ENCODE measurements at regions of chr13 and their contacts with region 1.

Region 1: DNA sequence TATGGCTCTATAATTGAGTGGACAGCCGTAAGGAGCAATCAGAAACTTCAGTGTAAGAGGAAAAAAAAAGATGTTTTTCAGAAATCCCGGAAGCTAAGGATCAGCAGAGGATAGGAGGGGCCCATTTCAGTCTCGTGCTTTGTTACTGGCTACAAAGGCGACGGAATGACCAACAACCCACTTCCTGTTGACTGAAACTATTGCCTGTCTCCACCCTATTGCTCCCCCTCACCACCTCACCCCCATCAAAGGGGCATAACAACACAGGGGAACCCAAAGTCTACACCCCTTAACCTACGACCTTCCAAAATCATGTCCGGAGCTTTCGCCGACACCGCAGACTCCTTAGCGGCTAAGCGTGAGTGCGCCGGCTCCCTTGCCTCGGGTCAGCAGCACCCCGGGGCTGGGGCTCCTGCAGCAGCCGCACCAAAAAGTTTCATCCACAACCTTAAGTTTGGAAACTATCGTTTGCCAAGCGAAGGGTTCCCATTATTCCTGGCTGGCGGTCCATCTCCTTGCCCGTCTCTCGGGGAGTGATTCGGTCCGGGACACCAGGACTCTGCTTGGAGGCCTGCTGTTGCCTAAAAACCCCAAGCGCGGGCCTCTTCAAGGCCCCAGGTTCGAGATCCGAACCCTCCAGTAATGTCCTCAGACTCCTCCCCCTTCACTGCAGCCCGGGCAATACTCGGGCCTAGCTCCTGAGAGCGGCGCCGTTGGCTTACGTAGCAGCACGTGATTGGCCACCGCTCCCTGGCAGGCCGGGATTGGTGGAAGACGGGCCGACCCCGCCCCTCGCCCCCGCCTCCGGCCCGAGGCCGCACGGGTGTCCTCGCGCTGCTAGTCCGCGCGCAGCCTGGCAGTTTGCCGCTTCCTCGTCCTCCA is at the start of gene TPP2:
- DNase-seq: peak; percentile 97
- H3K4me3 ChIP-seq: peak within 1 kb of the TSS; percentile 93
- H3K27ac ChIP-seq: peak within 1 kb of the TSS; percentile 100
- H3K27me3 ChIP-seq: no peaks in the 10 kb centered on the region
- CTCF ChIP-seq: no peak
- polyA plus RNA-seq, gene TPP2: 40.9 and 49.8 TPM in 2 replicates

Region 2: GRCh38 chr13:102571075-102571474 is 25.3 kb before region 1 on chr13:
- CTCF ChIA-PET with region 1: interaction called, 14 read pairs
- POLR2A ChIA-PET with region 1: no interaction called
- DNase-seq: no peak
- H3K4me3 ChIP-seq: no peak overlapping the region
- H3K27ac ChIP-seq: no peak overlapping the region
- H3K27me3 ChIP-seq: peaks cover 2% of the 10 kb centered on the region
- CTCF ChIP-seq: 0 out of 2 replicates have a peak, but pooled peaks have one; percentile 11

Region 3: DNA sequence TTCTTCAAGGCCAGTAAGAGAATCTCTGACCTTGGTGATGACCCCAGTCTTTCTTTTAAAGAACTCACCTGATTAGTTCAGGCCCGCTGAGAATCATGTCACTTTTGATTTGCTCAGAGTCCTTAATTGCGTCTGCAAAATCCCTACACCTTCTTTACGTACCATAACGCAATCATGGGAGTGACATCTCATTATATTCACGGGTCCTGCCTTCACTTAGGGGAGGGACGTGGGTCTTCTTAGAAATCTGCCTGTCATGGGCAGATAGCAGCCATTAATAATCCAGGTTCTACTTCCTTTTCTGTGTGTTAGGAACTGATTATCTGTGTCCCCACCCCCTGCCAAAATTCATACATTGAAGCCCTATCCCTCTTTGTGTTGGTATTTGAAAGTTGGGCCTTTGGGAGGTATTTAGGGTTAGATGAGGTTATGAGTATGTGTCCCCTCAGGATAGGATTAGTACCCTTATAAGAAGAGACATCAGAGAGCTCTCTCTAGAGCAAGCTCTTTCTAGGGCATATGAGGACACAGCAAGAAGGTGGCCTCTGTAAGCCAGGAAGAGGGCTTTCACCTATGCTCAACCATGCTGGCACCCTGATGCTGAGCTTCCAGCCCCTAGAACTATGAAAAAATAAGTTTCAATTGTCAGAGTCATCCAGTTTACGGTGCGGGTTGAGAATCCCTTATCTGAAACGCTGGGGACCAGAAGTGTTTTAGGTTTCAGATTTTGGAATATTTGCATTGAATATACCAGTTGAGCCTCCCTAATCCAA is 10.3 kb after region 1 on chr13:
- CTCF ChIA-PET with region 1: interaction called, 4 read pairs
- POLR2A ChIA-PET with region 1: interaction called, 14 read pairs
- DNase-seq: no peak
- H3K4me3 ChIP-seq: no peak overlapping the region
- H3K27ac ChIP-seq: no peak overlapping the region
- H3K27me3 ChIP-seq: no peaks in the 10 kb centered on the region
- CTCF ChIP-seq: no peak

Region 4: GRCh38 chr13:102651892-102652291 is 55.5 kb after region 1 on chr13:
- CTCF ChIA-PET with region 1: interaction called, 17 read pairs
- POLR2A ChIA-PET with region 1: interaction called, 5 read pairs
- DNase-seq: no peak
- H3K4me3 ChIP-seq: no peak overlapping the region
- H3K27ac ChIP-seq: no peak overlapping the region
- H3K27me3 ChIP-seq: no peaks in the 10 kb centered on the region
- CTCF ChIP-seq: no peak

Region 5: DNA sequence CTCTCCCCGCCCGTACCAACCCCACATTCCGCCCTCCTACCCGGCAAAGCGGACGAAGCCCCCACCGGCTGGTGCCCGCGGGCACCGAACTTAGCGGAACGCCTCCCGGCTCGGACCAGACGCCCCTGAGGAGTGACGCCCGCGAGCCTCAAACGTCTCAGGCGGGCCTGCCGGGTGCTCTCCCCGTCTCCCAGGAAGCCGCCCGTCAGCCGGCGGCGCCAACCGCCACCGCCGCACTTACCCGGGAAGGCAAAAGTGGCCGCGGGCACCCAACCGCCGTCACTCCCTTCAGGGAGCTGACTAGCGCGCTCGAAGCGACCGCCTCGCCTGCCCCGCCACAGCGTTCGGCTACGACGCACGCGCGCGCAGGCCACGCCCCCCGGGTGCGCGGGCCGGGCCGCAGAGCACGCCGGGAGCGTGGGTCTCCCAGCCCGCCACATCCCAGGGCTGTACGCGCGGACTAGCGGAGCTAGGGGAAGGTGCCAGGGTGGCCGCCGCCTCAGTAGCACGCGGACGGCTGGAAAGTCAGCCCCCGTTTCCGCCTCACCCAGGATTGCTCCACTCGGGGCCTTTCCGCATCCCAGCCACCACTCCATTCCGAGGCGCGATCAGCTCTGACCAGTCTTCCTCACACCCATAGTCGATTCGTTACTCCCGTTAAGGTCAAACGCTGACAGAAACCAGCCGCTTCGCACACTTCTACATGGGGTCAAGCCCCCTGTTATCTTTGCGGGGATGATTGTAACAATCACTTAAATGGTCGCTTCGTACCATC is 177.2 kb after region 1 on chr13 and contains the start of gene TEX30:
- CTCF ChIA-PET with region 1: interaction called, 10 read pairs
- POLR2A ChIA-PET with region 1: interaction called, 7 read pairs
- DNase-seq: peak; percentile 37
- H3K4me3 ChIP-seq: peak within 1 kb of the TSS; percentile 83
- H3K27ac ChIP-seq: peak within 1 kb of the TSS; percentile 75
- H3K27me3 ChIP-seq: no peaks in the 10 kb centered on the region
- CTCF ChIP-seq: no peak; the same call in 1 of the 2 replicates
- polyA plus RNA-seq, gene TEX30: 9.0 and 13.0 TPM in 2 replicates

Region 6: DNA sequence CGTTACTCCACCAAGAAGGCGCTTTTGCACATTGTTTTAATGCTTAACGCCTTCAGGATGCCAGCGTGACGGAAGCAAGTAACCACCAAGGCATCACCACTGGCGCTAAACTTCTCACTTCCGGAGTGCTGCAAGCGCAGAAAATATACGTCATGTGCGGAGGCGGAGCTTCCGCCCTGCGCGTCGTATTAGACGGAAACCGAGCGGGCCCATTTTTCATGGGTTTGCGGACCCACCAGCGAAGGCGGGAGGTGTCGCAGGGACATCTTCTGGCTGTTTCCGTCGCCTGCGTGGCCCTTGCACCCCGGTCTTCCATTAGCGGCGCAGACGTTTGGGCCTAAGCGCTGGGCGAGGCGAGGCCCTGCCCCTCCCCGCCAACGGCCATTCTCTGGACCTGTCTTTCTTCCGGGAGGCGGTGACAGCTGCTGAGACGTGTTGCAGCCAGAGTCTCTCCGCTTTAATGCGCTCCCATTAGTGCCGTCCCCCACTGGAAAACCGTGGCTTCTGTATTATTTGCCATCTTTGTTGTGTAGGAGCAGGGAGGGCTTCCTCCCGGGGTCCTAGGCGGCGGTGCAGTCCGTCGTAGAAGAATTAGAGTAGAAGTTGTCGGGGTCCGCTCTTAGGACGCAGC is 249.4 kb after region 1 on chr13 and contains the start of gene ERCC5:
- CTCF ChIA-PET with region 1: interaction called, 21 read pairs
- POLR2A ChIA-PET with region 1: interaction called, 15 read pairs
- DNase-seq: peak; percentile 79
- H3K4me3 ChIP-seq: peak within 1 kb of the TSS; percentile 95
- H3K27ac ChIP-seq: peak within 1 kb of the TSS; percentile 92
- H3K27me3 ChIP-seq: no peaks in the 10 kb centered on the region
- CTCF ChIP-seq: no peak
- polyA plus RNA-seq, gene ERCC5: 39.2 and 47.6 TPM in 2 replicates